ENCODE measurements at regions of chr11 and their contacts with region 1.

Region 1: GRCh38 chr11:3109921-3110706 is 52.9 kb upstream of the CARS1 start:
- DNase-seq: peak; percentile 37 to 56
- ATAC-seq: peak; percentile 88

Region 2: GRCh38 chr11:3189196-3189843 is 79.2 kb after region 1 on chr11:
- intact Hi-C with region 1: loop called in 1 of 2 experiments (anchors 10 kb)
- DNase-seq: no peak
- ATAC-seq: no peak

Region 3: GRCh38 chr11:3217676-3218482 is 107.8 kb after region 1 on chr11:
- intact Hi-C with region 1: loop called in 1 of 2 experiments (anchors 5 kb)
- DNase-seq: peak in 1 of 2 donors; percentile 15
- ATAC-seq: no peak